Heart right ventricle (tissue), 16 donors: ENCODE measurements at regions of chr4 and their contacts with region 1.

Region 1: GRCh38 chr4:85747882-85748491 is 273.0 kb downstream of the ARHGAP24 start:
- DNase-seq: peak in 1 of 2 donors; percentile 62
- ATAC-seq: peak; percentile 59 to 87 (median 80)
- H3K4me3 ChIP-seq: no peak overlapping the region
- H3K27ac ChIP-seq: no peak overlapping the region
- H3K4me1 ChIP-seq: peaks cover 0 to 34% (median 5%) of the 10 kb centered on the region in 9 donors
- H3K27me3 ChIP-seq: no peaks in the 10 kb centered on the region
- CTCF ChIP-seq: peak; percentile 82 to 93 (median 88)

Region 2: DNA sequence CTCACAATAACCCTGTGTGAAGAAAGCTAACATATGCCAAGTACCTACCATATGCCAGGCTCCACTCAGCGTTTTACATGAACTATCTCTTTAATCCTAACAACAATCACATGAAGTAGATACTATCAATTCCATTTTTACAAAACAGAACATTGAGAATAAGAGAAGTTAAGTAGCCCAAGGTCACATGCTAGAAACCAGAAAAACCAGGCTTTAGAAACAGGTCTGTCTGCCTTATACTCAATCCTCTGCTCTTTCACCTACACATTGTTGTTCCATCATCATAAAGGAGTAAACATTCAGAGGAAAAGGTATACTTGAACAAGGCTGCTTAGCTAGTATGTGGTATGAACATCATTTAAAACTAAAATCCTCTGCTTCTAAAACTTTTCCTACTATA is 823.6 kb before region 1 on chr4:
- intact Hi-C with region 1: no loop called
- DNase-seq: no peak
- ATAC-seq: no peak
- H3K4me3 ChIP-seq: no peak overlapping the region
- H3K27ac ChIP-seq: no peak overlapping the region
- H3K4me1 ChIP-seq: peaks cover 0 to 30% (median 18%) of the 10 kb centered on the region in 9 donors
- H3K27me3 ChIP-seq: no peaks in the 10 kb centered on the region
- CTCF ChIP-seq: no peak

Region 3: GRCh38 chr4:85147439-85148076 is 600.4 kb before region 1 on chr4:
- intact Hi-C with region 1: loop called (anchors 1 to 10 kb)
- DNase-seq: peak; percentile 27 to 65
- ATAC-seq: peak in 7 of 8 donors; percentile 54 to 86 (median 82)
- H3K4me3 ChIP-seq: peak overlapping the region in 7 of 10 donors; percentile 18 to 46 (median 28)
- H3K27ac ChIP-seq: peak overlapping the region in 3 of 10 donors; percentile 25 to 57 (median 27)
- H3K4me1 ChIP-seq: peaks cover 0 to 22% (median 11%) of the 10 kb centered on the region in 9 donors
- H3K27me3 ChIP-seq: no peaks in the 10 kb centered on the region
- CTCF ChIP-seq: peak; percentile 38 to 81 (median 72)

Region 4: GRCh38 chr4:85423431-85423830 is 324.6 kb before region 1 on chr4:
- intact Hi-C with region 1: loop called in 1 of 10 experiments (anchors 10 kb)
- DNase-seq: no peak
- ATAC-seq: peak in 1 of 8 donors; percentile 10
- H3K4me3 ChIP-seq: no peak overlapping the region
- H3K27ac ChIP-seq: no peak overlapping the region
- H3K4me1 ChIP-seq: peaks cover 0 to 19% (median 9%) of the 10 kb centered on the region in 9 donors
- H3K27me3 ChIP-seq: no peaks in the 10 kb centered on the region
- CTCF ChIP-seq: no peak

Region 5: GRCh38 chr4:85489273-85490265 is 258.4 kb before region 1 on chr4:
- intact Hi-C with region 1: loop called in 2 of 10 experiments (anchors 5 to 10 kb)
- DNase-seq: no peak
- ATAC-seq: peak in 4 of 8 donors; percentile 38 to 80 (median 58)
- H3K4me3 ChIP-seq: no peak overlapping the region
- H3K27ac ChIP-seq: peak overlapping the region in 1 of 10 donors; percentile 37
- H3K4me1 ChIP-seq: peaks cover 0 to 55% (median 17%) of the 10 kb centered on the region in 9 donors
- H3K27me3 ChIP-seq: no peaks in the 10 kb centered on the region
- CTCF ChIP-seq: no peak

Region 6: GRCh38 chr4:85591406-85592098 is 156.4 kb before region 1 on chr4:
- intact Hi-C with region 1: loop called in 1 of 10 experiments (anchors 10 kb)
- DNase-seq: no peak
- ATAC-seq: no peak
- H3K4me3 ChIP-seq: no peak overlapping the region
- H3K27ac ChIP-seq: no peak overlapping the region
- H3K4me1 ChIP-seq: peaks cover 0 to 16% (median 8%) of the 10 kb centered on the region in 9 donors
- H3K27me3 ChIP-seq: no peaks in the 10 kb centered on the region
- CTCF ChIP-seq: no peak

Region 7: DNA sequence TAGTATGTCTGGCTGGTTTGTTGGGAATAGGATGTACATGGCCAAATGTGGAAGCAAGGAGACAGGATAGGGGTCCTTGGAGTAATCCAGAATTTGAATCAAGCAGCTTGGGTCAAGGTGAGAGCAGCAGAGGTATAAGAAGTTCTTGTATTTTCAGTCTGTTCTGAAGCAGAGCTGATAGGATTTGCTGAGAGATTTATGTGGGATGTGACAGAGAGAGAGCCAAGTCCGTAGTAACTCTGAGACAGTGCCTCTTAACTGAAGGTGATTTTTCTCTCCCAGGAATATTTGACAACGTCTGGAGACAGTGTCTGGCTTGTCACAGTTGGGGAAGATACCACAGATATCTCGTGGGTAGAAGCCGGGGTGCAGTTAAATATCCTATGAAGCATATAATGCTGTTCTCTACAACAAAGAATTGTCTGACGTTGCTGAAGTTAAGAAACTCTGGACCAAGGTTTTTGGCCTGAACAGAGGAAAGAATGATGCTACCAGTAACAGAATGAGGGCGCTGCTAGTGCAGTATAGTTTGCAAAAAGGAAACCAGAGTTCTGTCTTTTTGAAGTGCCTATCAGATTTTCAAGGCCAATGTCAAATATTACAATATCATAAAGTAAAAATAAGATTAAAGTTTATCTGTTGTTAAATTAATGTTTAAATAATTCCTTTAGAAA is 89.1 kb before region 1 on chr4:
- intact Hi-C with region 1: loop called in 2 of 10 experiments (anchors 10 kb)
- DNase-seq: no peak
- ATAC-seq: peak in 5 of 8 donors; percentile 38 to 70 (median 59)
- H3K4me3 ChIP-seq: no peak overlapping the region
- H3K27ac ChIP-seq: peak overlapping the region in 5 of 10 donors; percentile 4 to 39 (median 32)
- H3K4me1 ChIP-seq: peaks cover 0 to 37% (median 0%) of the 10 kb centered on the region in 9 donors
- H3K27me3 ChIP-seq: no peaks in the 10 kb centered on the region
- CTCF ChIP-seq: peak in 3 of 9 donors; percentile 29 to 36 (median 34)

Region 8: GRCh38 chr4:85686398-85686797 is 61.6 kb before region 1 on chr4:
- intact Hi-C with region 1: no loop called
- DNase-seq: no peak
- ATAC-seq: no peak
- H3K4me3 ChIP-seq: no peak overlapping the region
- H3K27ac ChIP-seq: no peak overlapping the region
- H3K4me1 ChIP-seq: peaks cover 0 to 15% (median 2%) of the 10 kb centered on the region in 9 donors
- H3K27me3 ChIP-seq: no peaks in the 10 kb centered on the region
- CTCF ChIP-seq: no peak